CD4-positive, alpha-beta T cell (primary cell): ENCODE measurements at regions of chr15 and their contacts with region 1.

Region 1: GRCh38 chr15:34337557-34338306 is at the start of gene SLC12A6:
- DNase-seq: peak; percentile 80 to 97 (median 89)
- ATAC-seq: peak; percentile 79
- H3K4me3 ChIP-seq: peak within 1 kb of the TSS; percentile 98
- H3K4me3 Mint-ChIP-seq: peak within 1 kb of the TSS; percentile 100
- H3K27ac ChIP-seq: peak within 1 kb of the TSS; percentile 80 to 96
- H3K27ac Mint-ChIP-seq: peak within 1 kb of the TSS; percentile 98
- H3K4me1 ChIP-seq: peaks cover 49% of the 10 kb centered on the region
- H3K4me1 Mint-ChIP-seq: peaks cover 61% of the 10 kb centered on the region
- H3K27me3 ChIP-seq: no peaks in the 10 kb centered on the region
- H3K27me3 Mint-ChIP-seq: no peaks in the 10 kb centered on the region
- CTCF ChIP-seq: no peak
- total RNA-seq, gene SLC12A6: 58.5 to 58.7 TPM

Region 2: GRCh38 chr15:34101366-34102175 is 236.2 kb before region 1 on chr15 and contains the starts of genes EMC7 and PGBD4:
- CTCF ChIA-PET with region 1: no interaction called
- POLR2A ChIA-PET with region 1: interaction called, 9 read pairs
- intact Hi-C with region 1: loop called (anchors 5 kb)
- DNase-seq: peak; percentile 97 to 100 (median 99)
- ATAC-seq: peak; percentile 96
- H3K4me3 ChIP-seq: peak within 1 kb of the TSS; percentile 80
- H3K4me3 Mint-ChIP-seq: peak within 1 kb of the TSS; percentile 91
- H3K27ac ChIP-seq: peak within 1 kb of the TSS; percentile 86 to 97
- H3K27ac Mint-ChIP-seq: peak within 1 kb of the TSS; percentile 96
- H3K4me1 ChIP-seq: peaks cover 20% of the 10 kb centered on the region
- H3K4me1 Mint-ChIP-seq: peaks cover 54% of the 10 kb centered on the region
- H3K27me3 ChIP-seq: no peaks in the 10 kb centered on the region
- H3K27me3 Mint-ChIP-seq: no peaks in the 10 kb centered on the region
- CTCF ChIP-seq: no peak
- total RNA-seq, gene EMC7: 54.0 to 54.6 TPM
- total RNA-seq, gene PGBD4: 2.3 to 2.6 TPM

Region 3: GRCh38 chr15:34223904-34224596 is 113.7 kb before region 1 on chr15:
- CTCF ChIA-PET with region 1: interaction called, 6 read pairs
- POLR2A ChIA-PET with region 1: interaction called, 3 read pairs
- intact Hi-C with region 1: loop called in 1 of 2 experiments (anchors 5 kb)
- DNase-seq: peak in 2 of 14 experiments; percentile 6 to 21
- ATAC-seq: no peak
- H3K4me3 ChIP-seq: peak overlapping the region; percentile 68
- H3K4me3 Mint-ChIP-seq: peak overlapping the region; percentile 97
- H3K27ac ChIP-seq: peak overlapping the region in 1 of 2 donors; percentile 81
- H3K27ac Mint-ChIP-seq: peak overlapping the region; percentile 99
- H3K4me1 ChIP-seq: peaks cover 20% of the 10 kb centered on the region
- H3K4me1 Mint-ChIP-seq: peaks cover 23% of the 10 kb centered on the region
- H3K27me3 ChIP-seq: no peaks in the 10 kb centered on the region
- H3K27me3 Mint-ChIP-seq: peaks cover 5% of the 10 kb centered on the region
- CTCF ChIP-seq: no peak

Region 4: GRCh38 chr15:34241372-34242330 is 96.1 kb before region 1 on chr15:
- CTCF ChIA-PET with region 1: interaction called, 14 read pairs
- POLR2A ChIA-PET with region 1: interaction called, 11 read pairs
- intact Hi-C with region 1: no loop called
- DNase-seq: peak in 9 of 14 experiments; percentile 7 to 77 (median 25)
- ATAC-seq: peak; percentile 99
- H3K4me3 ChIP-seq: no peak overlapping the region
- H3K4me3 Mint-ChIP-seq: no peak overlapping the region
- H3K27ac ChIP-seq: no peak overlapping the region
- H3K27ac Mint-ChIP-seq: peak overlapping the region; percentile 22
- H3K4me1 ChIP-seq: no peaks in the 10 kb centered on the region
- H3K4me1 Mint-ChIP-seq: peaks cover 4% of the 10 kb centered on the region
- H3K27me3 ChIP-seq: no peaks in the 10 kb centered on the region
- H3K27me3 Mint-ChIP-seq: no peaks in the 10 kb centered on the region
- CTCF ChIP-seq: peak; percentile 93

Region 5: DNA sequence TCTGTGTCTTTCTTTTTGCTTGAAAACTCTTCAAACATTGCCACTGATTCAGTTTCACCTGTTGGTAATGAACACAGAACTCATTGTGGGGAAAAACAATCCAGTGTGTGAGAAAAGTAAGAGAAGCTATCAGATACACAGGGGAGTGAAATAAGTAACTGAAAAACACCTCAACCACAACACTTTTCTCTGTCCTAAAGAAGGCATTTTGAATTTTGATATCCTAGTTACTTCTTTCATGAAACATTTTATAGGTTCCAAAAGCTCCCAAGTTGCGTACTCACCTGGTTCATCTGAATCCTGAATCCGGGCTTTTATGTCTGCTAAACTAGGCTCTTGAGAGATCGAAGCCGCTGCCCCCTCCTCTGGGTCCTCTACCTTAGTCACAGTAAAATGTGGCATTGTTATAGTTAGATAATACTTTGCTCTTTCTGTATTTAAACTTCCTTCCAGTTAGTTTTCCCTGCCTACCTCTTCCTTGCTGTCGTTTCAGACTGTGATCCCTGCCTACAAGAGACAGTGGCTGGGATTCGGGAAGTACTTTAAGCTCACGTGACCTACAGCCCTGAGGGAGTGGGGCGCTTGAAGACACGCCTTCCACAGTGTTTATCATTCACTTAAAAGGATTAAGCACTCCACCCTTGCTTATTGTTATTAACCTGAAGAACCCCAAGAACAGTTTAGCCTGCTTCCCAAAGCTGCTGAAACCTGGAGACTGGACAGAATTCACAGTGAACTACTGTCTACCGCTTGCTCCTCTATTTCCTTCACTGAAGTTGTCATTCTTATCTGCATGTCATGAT is 19.3 kb before region 1 on chr15:
- CTCF ChIA-PET with region 1: interaction called, 3 read pairs
- POLR2A ChIA-PET with region 1: interaction called, 127 read pairs
- intact Hi-C with region 1: loop called in 1 of 2 experiments (anchors 2 kb)
- DNase-seq: peak in 7 of 14 experiments; percentile 12 to 62 (median 45)
- ATAC-seq: peak; percentile 85
- H3K4me3 ChIP-seq: peak overlapping the region; percentile 69
- H3K4me3 Mint-ChIP-seq: peak overlapping the region; percentile 99
- H3K27ac ChIP-seq: peak overlapping the region; percentile 11 to 38
- H3K27ac Mint-ChIP-seq: peak overlapping the region; percentile 97
- H3K4me1 ChIP-seq: peaks cover 16% of the 10 kb centered on the region
- H3K4me1 Mint-ChIP-seq: peaks cover 74% of the 10 kb centered on the region
- H3K27me3 ChIP-seq: no peaks in the 10 kb centered on the region
- H3K27me3 Mint-ChIP-seq: no peaks in the 10 kb centered on the region
- CTCF ChIP-seq: no peak

Region 6: GRCh38 chr15:34437687-34438086 is 100.0 kb after region 1 on chr15 and contains the start of gene GOLGA8A:
- CTCF ChIA-PET with region 1: no interaction called
- POLR2A ChIA-PET with region 1: interaction called, 14 read pairs
- intact Hi-C with region 1: no loop called
- DNase-seq: peak; percentile 72 to 93 (median 84)
- ATAC-seq: peak; percentile 79
- H3K4me3 ChIP-seq: peak within 1 kb of the TSS; percentile 60
- H3K4me3 Mint-ChIP-seq: peak within 1 kb of the TSS; percentile 100
- H3K27ac ChIP-seq: peak within 1 kb of the TSS in 1 of 2 donors; percentile 7
- H3K27ac Mint-ChIP-seq: peak within 1 kb of the TSS; percentile 96
- H3K4me1 ChIP-seq: peaks cover 17% of the 10 kb centered on the region
- H3K4me1 Mint-ChIP-seq: peaks cover 27% of the 10 kb centered on the region
- H3K27me3 ChIP-seq: no peaks in the 10 kb centered on the region
- H3K27me3 Mint-ChIP-seq: peaks cover 5% of the 10 kb centered on the region
- CTCF ChIP-seq: no peak
- total RNA-seq, gene GOLGA8A: 276 to 295 TPM